ENCODE measurements at regions of chr12 and their contacts with region 1.

Region 1: DNA sequence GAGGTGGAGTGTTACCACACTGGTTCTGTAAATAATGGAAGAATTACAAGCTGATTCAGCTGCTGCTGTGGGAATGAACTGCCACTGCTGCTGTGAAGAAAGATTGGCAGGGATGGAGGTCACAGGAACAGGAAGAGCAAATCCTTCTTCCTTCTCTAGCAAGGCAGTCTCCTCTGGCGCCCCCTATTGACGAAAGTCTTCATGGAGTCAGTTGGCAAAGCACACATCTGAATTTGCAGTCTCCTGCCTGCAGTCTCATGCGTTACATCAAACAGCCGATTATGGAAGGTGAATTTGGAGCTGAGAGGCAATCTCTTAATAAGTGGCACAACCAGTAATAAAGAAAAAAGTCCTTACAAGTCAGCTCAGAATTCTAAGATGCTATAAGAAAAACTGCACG is 106.0 kb upstream of the TMTC1 start:
- DNase-seq: peak in 4 of 5 donors; percentile 52 to 71 (median 58)
- ATAC-seq: peak in 3 of 4 donors; percentile 36 to 57 (median 56)
- H3K4me3 ChIP-seq: no peak overlapping the region
- H3K27ac ChIP-seq: no peak overlapping the region
- H3K4me1 ChIP-seq: no peaks in the 10 kb centered on the region
- H3K27me3 ChIP-seq: no peaks in the 10 kb centered on the region
- CTCF ChIP-seq: peak; percentile 44 to 71 (median 59)
- POLR2A ChIP-seq: no peak

Region 2: DNA sequence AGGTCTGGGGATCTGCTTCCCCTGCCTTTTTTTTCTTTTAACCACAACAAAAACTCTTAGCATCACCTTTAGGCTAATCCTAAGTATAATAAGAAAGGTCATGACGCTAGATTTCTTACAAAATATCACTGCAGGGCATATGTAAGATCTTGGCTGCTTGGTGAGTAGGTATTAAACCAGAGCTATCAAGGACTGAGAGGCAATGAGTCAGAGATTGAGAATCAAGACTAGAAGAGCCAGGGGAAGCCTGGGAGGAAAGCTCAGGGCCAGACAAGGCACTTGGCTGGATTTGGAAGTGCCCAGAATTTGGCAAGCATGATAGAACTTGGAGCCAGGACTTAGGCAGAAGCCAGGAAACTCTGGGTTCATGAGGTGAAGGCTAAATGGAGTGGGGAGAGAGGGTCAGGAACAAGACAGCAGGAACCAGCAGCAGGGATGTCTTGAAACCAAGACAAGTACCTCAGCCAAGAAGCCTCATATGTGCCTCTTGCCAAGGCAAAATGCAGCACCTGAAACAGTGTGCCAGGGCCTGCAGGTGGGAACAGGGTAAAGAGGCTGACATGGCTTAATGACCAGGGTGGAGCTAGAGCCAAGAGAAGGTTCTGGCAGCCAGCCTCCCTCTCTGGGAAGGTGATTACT is 1967.1 kb before region 1 on chr12:
- intact Hi-C with region 1: no loop called
- DNase-seq: peak in 3 of 5 donors; percentile 11 to 40 (median 37)
- ATAC-seq: peak; percentile 64 to 86 (median 78)
- H3K4me3 ChIP-seq: no peak overlapping the region
- H3K27ac ChIP-seq: no peak overlapping the region
- H3K4me1 ChIP-seq: peaks cover 0 to 8% (median 0%) of the 10 kb centered on the region in 12 donors
- H3K27me3 ChIP-seq: no peaks in the 10 kb centered on the region
- CTCF ChIP-seq: no peak
- POLR2A ChIP-seq: no peak

Region 3: GRCh38 chr12:29116414-29116813 is 773.3 kb before region 1 on chr12:
- intact Hi-C with region 1: no loop called
- DNase-seq: no peak
- ATAC-seq: no peak
- H3K4me3 ChIP-seq: no peak overlapping the region
- H3K27ac ChIP-seq: no peak overlapping the region
- H3K4me1 ChIP-seq: no peaks in the 10 kb centered on the region
- H3K27me3 ChIP-seq: no peaks in the 10 kb centered on the region
- CTCF ChIP-seq: no peak
- POLR2A ChIP-seq: no peak

Region 4: DNA sequence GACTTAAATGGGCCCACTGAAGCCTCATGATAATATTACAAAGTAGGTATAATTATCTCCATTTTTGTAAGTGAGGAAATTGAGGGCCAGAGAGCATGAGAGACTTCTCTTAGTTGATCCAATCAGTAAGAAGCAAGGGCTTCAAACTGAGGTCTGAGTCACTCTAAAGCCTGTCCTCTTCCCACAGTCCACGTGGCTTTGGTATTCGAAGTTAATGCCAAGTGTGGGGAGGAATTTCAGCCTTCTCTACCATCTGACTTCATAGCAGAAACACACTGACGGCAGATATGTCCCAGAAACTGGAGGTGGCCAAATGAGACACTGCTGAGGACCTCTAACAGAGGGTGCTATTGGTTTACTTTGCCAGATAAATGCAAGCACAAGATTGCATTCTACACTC is 277.8 kb before region 1 on chr12:
- intact Hi-C with region 1: loop called in 1 of 10 experiments (anchors 10 kb)
- DNase-seq: no peak
- ATAC-seq: peak; percentile 41 to 80 (median 75)
- H3K4me3 ChIP-seq: no peak overlapping the region
- H3K27ac ChIP-seq: no peak overlapping the region
- H3K4me1 ChIP-seq: peaks cover 0 to 41% (median 19%) of the 10 kb centered on the region in 12 donors
- H3K27me3 ChIP-seq: no peaks in the 10 kb centered on the region
- CTCF ChIP-seq: peak in 2 of 12 donors; percentile 11 to 15
- POLR2A ChIP-seq: no peak

Region 5: GRCh38 chr12:30082381-30082780 is 192.6 kb after region 1 on chr12:
- intact Hi-C with region 1: no loop called
- DNase-seq: no peak
- ATAC-seq: no peak
- H3K4me3 ChIP-seq: no peak overlapping the region
- H3K27ac ChIP-seq: no peak overlapping the region
- H3K4me1 ChIP-seq: no peaks in the 10 kb centered on the region
- H3K27me3 ChIP-seq: no peaks in the 10 kb centered on the region
- CTCF ChIP-seq: no peak
- POLR2A ChIP-seq: no peak

Measured in heart left ventricle (tissue), 16 donors.